ENCODE measurements at regions of chr1 and their contacts with region 1.

Region 1: DNA sequence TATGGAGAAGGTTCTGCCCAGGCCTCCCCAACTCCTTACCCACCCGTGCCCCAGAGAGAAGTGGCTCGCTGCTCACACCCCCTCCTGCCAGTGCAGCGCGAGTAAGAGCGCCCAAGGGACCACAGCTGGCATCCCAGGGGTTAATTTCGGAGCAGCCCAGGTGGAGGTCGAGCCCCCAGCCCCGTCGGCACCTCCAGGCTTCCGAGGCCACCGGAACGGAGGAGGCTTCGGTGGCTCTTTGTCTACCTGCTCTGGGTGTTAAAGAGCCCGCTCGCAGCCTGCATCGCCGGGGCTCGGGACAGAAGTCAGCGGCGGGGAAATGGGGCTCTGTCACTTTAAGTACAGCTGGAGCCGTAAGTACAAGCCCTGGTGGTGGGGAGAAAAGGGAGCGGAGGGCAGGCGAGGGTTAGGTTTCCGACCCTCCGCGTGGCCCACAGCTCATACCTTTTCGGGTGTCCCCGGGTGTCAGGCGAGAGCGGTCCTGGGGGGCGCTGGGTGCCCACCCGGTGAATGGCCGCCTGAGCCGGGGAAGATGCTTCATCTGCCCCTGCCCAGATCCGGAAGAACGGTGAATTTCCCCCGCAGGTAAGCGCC is 89.4 kb upstream of the IPO9 start:
- DNase-seq: peak; percentile 88
- H3K4me3 ChIP-seq: peak overlapping the region; percentile 42 to 62 (median 58)
- H3K27ac ChIP-seq: peak overlapping the region; percentile 61 to 73 (median 70)
- H3K4me1 ChIP-seq: peaks cover 0 to 79% (median 61%) of the 10 kb centered on the region in 4 donors
- H3K27me3 ChIP-seq: no peaks in the 10 kb centered on the region
- CTCF ChIP-seq: no peak
- EP300 ChIP-seq: no peak
- POLR2A ChIP-seq: no peak

Region 2: DNA sequence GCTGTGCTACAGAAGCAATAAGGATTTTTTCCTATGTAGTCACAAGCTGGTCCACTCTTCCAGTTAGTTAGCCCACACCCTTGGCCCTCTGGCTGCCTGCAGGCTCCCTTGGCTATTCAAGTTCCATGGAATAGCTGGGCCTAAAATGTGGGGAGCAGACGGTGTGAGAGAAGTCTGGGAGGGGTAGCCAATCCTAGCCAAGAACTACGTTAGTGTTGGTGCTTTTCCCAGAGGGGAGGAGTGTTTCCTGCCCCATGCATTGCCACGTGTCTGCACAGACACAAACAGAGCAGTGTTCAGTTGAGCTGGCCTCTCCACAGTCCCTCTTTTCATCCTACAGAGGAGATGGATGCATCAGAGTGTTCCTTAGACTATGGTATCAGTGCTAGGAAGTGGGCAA is 30.4 kb after region 1 on chr1:
- intact Hi-C with region 1: loop called (anchors 5 kb)
- DNase-seq: no peak
- H3K4me3 ChIP-seq: no peak overlapping the region
- H3K27ac ChIP-seq: peak overlapping the region in 1 of 4 donors; percentile 14
- H3K4me1 ChIP-seq: peaks cover 0 to 24% (median 8%) of the 10 kb centered on the region in 4 donors
- H3K27me3 ChIP-seq: no peaks in the 10 kb centered on the region
- CTCF ChIP-seq: no peak
- EP300 ChIP-seq: no peak
- POLR2A ChIP-seq: no peak

Measured in sigmoid colon (tissue), 7 donors.